AG04449 (cell line): ENCODE measurements at regions of chr1 and their contacts with region 1.

Region 1: DNA sequence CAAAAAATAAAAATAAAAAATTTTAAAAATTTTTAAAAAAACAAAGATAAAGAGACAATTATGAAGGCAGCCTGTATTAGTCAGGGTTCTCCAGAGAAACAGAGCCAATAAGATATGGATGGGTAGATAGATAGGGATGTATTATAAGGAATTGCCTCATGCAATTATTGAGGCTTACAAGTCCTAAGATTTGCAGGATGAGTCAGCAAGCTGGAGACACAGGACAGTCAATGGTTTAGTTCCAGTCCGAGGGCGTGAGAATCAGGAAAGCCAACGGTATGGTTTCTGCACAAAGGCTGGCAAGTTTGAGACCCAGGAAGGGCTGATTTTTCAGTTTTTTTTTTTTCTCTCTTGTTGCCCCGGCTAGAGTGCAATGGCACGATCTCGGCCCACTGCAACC is 24.1 kb upstream of the EIF4G3 start:
- DNase-seq: no peak
- H3K4me3 ChIP-seq: no peak overlapping the region
- CTCF ChIP-seq: no peak

Region 2: GRCh38 chr1:20702416-20702815 is 498.4 kb before region 1 on chr1:
- CTCF ChIA-PET with region 1: interaction called, 185 read pairs
- POLR2A ChIA-PET with region 1: no interaction called
- DNase-seq: no peak
- H3K4me3 ChIP-seq: no peak overlapping the region
- CTCF ChIP-seq: peak; percentile 53

Region 3: GRCh38 chr1:20786253-20787028 is 414.3 kb before region 1 on chr1:
- CTCF ChIA-PET with region 1: interaction called, 16 read pairs
- POLR2A ChIA-PET with region 1: interaction called, 10 read pairs
- DNase-seq: peak; percentile 23
- H3K4me3 ChIP-seq: peak overlapping the region; percentile 96
- CTCF ChIP-seq: no peak

Region 4: GRCh38 chr1:20948101-20948500 is 252.7 kb before region 1 on chr1:
- CTCF ChIA-PET with region 1: interaction called, 14 read pairs
- POLR2A ChIA-PET with region 1: no interaction called
- DNase-seq: no peak
- H3K4me3 ChIP-seq: no peak overlapping the region
- CTCF ChIP-seq: no peak

Region 5: GRCh38 chr1:21176586-21177555 is 23.9 kb before region 1 on chr1 and contains the start of gene EIF4G3:
- CTCF ChIA-PET with region 1: interaction called, 16 read pairs
- POLR2A ChIA-PET with region 1: no interaction called
- DNase-seq: peak; percentile 62
- H3K4me3 ChIP-seq: peak within 1 kb of the TSS; percentile 83
- CTCF ChIP-seq: no peak

Region 6: DNA sequence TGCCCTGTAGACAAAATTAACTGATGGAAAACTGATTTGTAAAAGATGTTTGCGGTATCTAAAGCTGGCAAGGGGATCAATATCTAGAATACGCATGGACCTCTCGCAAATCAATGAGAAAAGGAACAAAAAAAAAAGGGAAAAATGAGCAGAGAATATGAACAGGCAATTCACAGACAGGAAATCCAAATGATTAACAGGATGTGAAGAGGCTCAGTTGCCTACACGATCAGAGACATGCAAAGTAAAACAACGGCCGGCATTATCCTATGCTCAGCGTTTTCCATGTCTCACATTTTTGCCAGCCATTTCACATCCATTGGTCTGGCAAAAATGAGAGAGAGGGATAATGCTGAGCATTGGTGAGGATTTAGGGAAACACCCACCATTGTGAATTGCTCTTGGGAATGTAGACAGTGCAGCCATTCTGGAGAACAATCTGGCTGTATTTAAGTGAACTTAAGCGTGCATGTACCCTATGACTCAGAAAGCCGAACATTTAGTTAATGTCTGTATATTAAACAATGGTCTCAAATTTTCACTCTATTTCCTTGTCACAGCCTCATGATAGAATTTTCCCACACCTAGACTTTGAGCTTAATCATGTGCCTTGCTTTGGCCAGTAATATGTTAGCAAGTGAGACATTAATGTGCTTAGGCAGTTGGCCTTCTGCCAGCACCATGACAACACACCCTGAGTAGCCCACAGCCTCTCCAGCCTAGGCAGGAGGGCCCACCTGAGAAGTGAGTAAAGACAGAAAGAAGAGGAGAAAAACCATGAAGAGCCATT is 178.1 kb after region 1 on chr1:
- CTCF ChIA-PET with region 1: no interaction called
- POLR2A ChIA-PET with region 1: no interaction called
- DNase-seq: no peak
- H3K4me3 ChIP-seq: no peak overlapping the region
- CTCF ChIP-seq: no peak